HCT116 (cell line): ENCODE measurements at regions of chr13 and their contacts with region 1.

Region 1: GRCh38 chr13:97855570-97856303 is 97.7 kb upstream of the IPO5 start:
- DNase-seq: peak; percentile 58
- ATAC-seq: peak; percentile 96
- H3K4me3 ChIP-seq: no peak overlapping the region
- H3K27ac ChIP-seq: no peak overlapping the region
- H3K4me1 ChIP-seq: no peaks in the 10 kb centered on the region
- H3K27me3 ChIP-seq: no peaks in the 10 kb centered on the region
- CTCF ChIP-seq: peak; percentile 73 to 84 (median 74)
- POLR2A ChIP-seq: no peak
- RAD21 ChIP-seq: peak; percentile 90

Region 2: DNA sequence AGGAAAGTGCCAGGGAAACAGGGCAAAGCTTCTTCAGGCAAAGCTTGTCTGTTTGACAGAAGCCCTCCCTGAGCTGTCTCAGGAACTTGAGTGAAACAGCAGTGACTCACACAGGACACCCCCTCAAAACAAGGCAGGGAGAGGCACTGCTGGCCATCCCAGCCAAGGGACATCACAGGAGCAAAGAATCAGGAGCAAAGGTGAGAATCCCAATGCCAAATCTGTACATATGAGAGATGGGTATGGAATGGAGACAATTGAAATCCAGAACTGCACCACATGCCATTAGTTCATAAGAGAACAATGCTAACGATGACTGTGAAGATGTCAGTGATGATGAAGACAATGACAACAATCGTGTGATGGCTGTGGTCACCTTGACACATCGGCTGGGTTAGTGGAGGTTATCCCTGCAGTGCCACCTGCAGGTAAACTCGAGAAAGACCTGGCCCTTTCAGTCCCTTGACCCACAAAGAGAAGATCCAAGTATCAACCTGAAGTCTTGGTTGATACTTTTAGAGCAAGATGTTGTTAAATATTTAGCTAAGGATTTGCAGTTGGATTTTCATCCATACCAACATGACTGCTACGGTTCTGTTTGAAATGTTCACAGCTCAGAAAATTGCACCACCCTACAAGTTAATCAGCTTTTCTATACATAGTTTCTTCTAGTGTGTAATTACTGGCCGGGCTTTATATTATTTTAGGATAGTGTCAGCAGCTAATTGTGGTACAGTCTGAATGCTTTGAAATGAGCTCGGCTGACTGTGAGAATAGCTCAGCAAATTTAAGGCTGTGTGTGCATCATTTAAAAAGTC is 55.8 kb after region 1 on chr13:
- CTCF ChIA-PET with region 1: interaction called, 4 read pairs
- POLR2A ChIA-PET with region 1: no interaction called
- RAD21 ChIA-PET with region 1: no interaction called
- intact Hi-C with region 1: loop called (anchors 2 kb)
- DNase-seq: peak; percentile 21
- ATAC-seq: peak; percentile 87
- H3K4me3 ChIP-seq: no peak overlapping the region
- H3K27ac ChIP-seq: no peak overlapping the region
- H3K4me1 ChIP-seq: no peaks in the 10 kb centered on the region
- H3K27me3 ChIP-seq: no peaks in the 10 kb centered on the region
- CTCF ChIP-seq: peak; percentile 17 to 68 (median 66); a peak in 4 of 6 replicates
- POLR2A ChIP-seq: no peak
- RAD21 ChIP-seq: peak; percentile 40; the same call in 1 of the 2 replicates

Region 3: GRCh38 chr13:97975848-97976609 is 120.3 kb after region 1 on chr13:
- CTCF ChIA-PET with region 1: no interaction called
- POLR2A ChIA-PET with region 1: no interaction called
- RAD21 ChIA-PET with region 1: no interaction called
- intact Hi-C with region 1: loop called (anchors 1 kb)
- DNase-seq: peak; percentile 42
- ATAC-seq: peak; percentile 92
- H3K4me3 ChIP-seq: peak overlapping the region; percentile 67 to 78
- H3K27ac ChIP-seq: peak overlapping the region; percentile 90
- H3K4me1 ChIP-seq: peaks cover 12 to 30% of the 10 kb centered on the region in 2 experiments
- H3K27me3 ChIP-seq: no peaks in the 10 kb centered on the region
- CTCF ChIP-seq: no peak
- POLR2A ChIP-seq: no peak
- RAD21 ChIP-seq: no peak

Region 4: GRCh38 chr13:98004111-98004510 is 148.4 kb after region 1 on chr13:
- CTCF ChIA-PET with region 1: no interaction called
- POLR2A ChIA-PET with region 1: no interaction called
- RAD21 ChIA-PET with region 1: no interaction called
- intact Hi-C with region 1: loop called (anchors 10 kb)
- DNase-seq: no peak
- ATAC-seq: no peak
- H3K4me3 ChIP-seq: no peak overlapping the region
- H3K27ac ChIP-seq: no peak overlapping the region
- H3K4me1 ChIP-seq: no peaks in the 10 kb centered on the region
- H3K27me3 ChIP-seq: no peaks in the 10 kb centered on the region
- CTCF ChIP-seq: no peak
- POLR2A ChIP-seq: no peak
- RAD21 ChIP-seq: no peak

Region 5: GRCh38 chr13:98111168-98112098 is 255.7 kb after region 1 on chr13:
- CTCF ChIA-PET with region 1: no interaction called
- POLR2A ChIA-PET with region 1: no interaction called
- RAD21 ChIA-PET with region 1: no interaction called
- intact Hi-C with region 1: loop called (anchors 10 kb)
- DNase-seq: no peak
- ATAC-seq: no peak
- H3K4me3 ChIP-seq: no peak overlapping the region
- H3K27ac ChIP-seq: no peak overlapping the region
- H3K4me1 ChIP-seq: no peaks in the 10 kb centered on the region
- H3K27me3 ChIP-seq: no peaks in the 10 kb centered on the region
- CTCF ChIP-seq: no peak
- POLR2A ChIP-seq: no peak
- RAD21 ChIP-seq: no peak

Region 6: GRCh38 chr13:98429977-98430736 is 574.4 kb after region 1 on chr13:
- CTCF ChIA-PET with region 1: interaction called, 6 read pairs
- POLR2A ChIA-PET with region 1: no interaction called
- RAD21 ChIA-PET with region 1: interaction called in 1 of 2 experiments, 3 read pairs
- intact Hi-C with region 1: loop called (anchors 1 kb)
- DNase-seq: no peak
- ATAC-seq: no peak
- H3K4me3 ChIP-seq: no peak overlapping the region
- H3K27ac ChIP-seq: no peak overlapping the region
- H3K4me1 ChIP-seq: peaks cover 0 to 4% of the 10 kb centered on the region in 2 experiments; a peak in 1 of 4 replicates
- H3K27me3 ChIP-seq: no peaks in the 10 kb centered on the region
- CTCF ChIP-seq: no peak
- POLR2A ChIP-seq: no peak
- RAD21 ChIP-seq: no peak